ENCODE measurements at regions of chr9 and their contacts with region 1.

Region 1: GRCh38 chr9:36276781-36277181 is 18.5 kb upstream of the GNE start:
- DNase-seq: peak; percentile 42
- H3K4me3 ChIP-seq: peak overlapping the region; percentile 40
- CTCF ChIP-seq: no peak

Region 2: DNA sequence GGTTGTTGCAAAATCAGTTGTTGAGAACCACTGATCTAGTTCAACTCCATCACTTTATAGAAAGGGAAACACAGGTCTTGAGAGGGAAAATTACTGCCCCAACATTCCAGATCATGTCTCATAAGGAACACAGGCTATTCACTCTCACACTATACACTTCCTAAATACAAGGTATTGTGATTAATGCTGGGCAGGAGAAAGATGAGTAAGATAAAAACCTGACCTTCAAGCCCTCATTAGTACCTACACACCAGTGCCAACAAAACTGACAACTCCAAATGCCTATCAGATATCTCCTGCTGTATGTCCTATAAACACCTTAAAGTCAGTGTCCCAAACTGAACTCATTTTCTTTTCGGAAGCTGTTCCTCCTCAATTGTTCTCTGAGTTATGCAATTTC is 26.7 kb before region 1 on chr9:
- CTCF ChIA-PET with region 1: interaction called, 10 read pairs
- POLR2A ChIA-PET with region 1: no interaction called
- DNase-seq: no peak
- H3K4me3 ChIP-seq: no peak overlapping the region
- CTCF ChIP-seq: no peak

Region 3: DNA sequence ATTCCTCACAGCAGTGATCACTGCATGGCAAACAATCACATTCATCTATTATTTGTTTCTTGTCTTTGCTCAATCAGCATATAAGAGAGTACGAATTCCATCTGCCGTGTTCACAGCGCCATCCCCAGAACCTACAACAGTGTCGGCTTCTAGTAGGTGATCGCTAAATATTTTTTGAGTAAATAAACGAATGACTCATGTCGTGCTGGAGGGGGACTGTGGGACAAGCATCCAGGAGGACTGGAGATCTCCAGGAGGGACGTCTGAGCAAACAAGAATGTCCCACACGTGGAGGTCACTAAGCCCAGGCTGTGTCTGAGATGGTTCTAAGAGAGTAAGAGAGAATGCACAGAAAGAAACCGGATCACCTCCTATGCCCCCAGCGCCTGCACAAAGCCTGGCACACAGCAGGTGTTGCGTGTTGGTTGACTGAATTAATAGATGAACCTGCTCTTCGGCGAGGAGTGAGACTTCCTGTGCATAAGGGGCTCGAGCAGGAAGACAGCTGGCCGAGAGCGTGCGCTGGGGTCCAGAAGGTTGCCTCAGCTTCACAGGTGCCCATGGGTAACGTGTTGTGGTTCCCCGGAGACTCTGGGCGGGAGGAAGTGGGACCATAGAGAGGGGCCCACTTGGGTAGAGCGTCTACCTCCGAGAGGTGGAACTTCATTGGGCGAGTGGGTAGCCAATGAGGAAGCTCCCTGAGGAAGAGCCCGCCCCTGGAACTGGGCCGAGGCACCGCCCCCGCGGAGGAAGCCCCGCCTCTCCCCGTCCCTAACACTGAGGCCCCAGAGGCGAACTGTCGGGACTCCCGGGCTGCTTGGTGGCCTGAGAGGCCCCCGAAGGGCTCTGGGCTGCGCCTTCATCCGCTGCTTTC is 488.9 kb after region 1 on chr9:
- CTCF ChIA-PET with region 1: no interaction called
- POLR2A ChIA-PET with region 1: no interaction called
- DNase-seq: no peak
- H3K4me3 ChIP-seq: 0 out of 2 replicates have a peak overlapping the region, but pooled peaks have one; percentile 6
- CTCF ChIP-seq: no peak